ENCODE measurements at regions of chr10 and their contacts with region 1.

Region 1: DNA sequence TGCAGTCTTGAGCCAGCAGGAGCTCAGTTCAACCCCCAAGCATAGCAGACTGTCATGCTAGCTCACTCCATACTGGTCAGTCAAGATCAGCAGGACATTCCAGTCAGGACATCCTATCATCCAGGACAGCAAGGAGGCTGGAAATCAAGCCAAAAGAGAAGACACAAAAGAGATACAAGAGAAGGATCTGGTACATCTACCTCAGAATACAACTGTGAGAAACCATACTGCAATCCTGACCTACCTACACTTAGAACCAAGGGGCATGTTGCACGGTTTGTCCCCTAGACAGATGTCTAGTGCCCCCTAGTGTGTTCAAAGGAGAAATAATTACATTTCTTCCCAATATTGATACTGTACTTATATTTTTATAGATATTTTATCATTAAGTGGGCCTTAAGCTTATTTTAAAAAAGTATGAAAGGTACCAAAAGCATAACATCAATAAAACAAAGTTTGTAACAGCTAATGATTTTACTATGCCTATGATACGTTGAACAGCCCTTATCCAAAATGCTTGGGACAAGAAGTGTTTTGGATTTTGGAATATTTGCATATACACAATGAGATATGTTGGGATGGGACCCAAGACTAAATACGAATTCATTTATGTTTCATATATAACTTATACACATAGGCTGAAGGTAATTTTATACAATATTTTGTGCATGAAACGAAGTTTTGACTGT is 26.7 kb downstream of the ERCC6 start:
- DNase-seq: no peak
- H3K4me3 ChIP-seq: no peak overlapping the region
- H3K27ac ChIP-seq: no peak overlapping the region
- H3K4me1 ChIP-seq: no peaks in the 10 kb centered on the region
- H3K27me3 ChIP-seq: no peaks in the 10 kb centered on the region
- CTCF ChIP-seq: peak; percentile 37

Region 2: GRCh38 chr10:49230004-49230403 is 282.3 kb before region 1 on chr10:
- intact Hi-C with region 1: no loop called
- DNase-seq: no peak
- H3K4me3 ChIP-seq: no peak overlapping the region
- H3K27ac ChIP-seq: no peak overlapping the region
- H3K4me1 ChIP-seq: no peaks in the 10 kb centered on the region
- H3K27me3 ChIP-seq: no peaks in the 10 kb centered on the region
- CTCF ChIP-seq: no peak

Region 3: DNA sequence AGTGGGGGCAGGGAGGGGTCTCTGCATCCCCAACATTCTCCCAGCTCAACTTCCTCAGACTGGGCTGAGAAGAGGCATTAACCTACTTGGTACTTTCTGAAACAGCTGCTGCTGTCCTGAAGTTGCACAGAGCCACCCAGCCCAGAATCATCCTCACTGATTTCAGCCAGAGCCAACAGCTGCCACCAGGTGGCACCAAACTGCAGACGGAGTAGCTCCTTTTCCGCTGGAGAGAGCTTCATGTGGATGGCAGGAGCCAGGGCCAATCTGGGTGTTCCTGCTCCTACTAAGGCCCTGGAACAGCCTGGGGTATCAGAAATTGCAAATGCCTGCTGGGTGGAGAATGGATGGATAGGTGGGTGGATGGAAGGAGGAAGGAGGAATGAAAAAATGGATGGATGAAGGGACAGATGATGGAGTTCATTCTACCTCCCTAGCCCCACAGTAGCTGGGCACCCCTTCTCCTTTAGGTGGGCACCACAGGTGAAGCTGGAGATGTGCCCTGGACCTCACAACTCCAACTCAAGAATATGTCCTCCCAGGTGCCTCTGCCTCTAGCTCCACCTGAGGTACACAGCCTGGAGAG is 104.6 kb before region 1 on chr10:
- intact Hi-C with region 1: loop called (anchors 5 kb)
- DNase-seq: peak; percentile 80
- H3K4me3 ChIP-seq: no peak overlapping the region
- H3K27ac ChIP-seq: no peak overlapping the region
- H3K4me1 ChIP-seq: no peaks in the 10 kb centered on the region
- H3K27me3 ChIP-seq: no peaks in the 10 kb centered on the region
- CTCF ChIP-seq: peak; percentile 80

Region 4: DNA sequence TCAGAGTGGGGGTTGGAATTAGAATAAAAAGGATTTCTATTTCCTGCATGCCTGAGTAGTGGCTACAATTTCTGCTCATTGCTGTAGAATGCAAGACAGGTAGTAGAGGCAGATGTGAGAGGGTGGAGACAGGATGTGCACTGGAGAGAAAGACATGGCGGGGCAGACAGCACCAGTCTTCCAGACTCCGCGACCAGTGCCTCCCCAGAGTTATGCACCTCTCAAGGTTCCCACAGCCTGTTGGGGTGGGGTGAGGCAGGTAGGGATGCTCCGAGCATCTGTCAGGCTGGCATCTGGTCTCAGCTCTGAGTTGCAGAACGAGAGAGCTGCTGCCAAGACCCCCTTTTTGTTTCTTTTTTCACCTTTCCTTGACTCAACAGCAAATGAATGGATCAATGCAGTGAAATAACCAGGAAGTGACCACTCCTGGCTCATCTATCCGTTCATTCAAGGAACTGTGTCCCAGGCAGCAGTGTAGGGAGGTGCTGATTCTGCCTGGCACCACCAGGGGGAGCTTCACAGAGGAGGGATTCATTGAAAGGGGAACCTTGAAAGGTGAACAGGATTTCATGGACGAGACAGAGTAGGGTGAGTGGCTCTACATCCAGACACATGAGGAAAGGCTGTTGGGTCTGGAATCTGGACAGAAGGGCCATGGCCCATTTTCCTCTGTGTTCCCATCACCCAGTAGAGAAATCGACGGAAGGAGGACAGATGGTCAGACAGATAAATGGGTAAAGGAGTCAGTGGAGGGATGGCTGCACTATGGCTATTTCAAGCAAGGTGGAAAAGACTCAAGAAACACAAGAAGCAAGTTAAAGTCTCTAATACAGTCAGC is 80.7 kb after region 1 on chr10:
- intact Hi-C with region 1: no loop called
- DNase-seq: peak; percentile 65
- H3K4me3 ChIP-seq: no peak overlapping the region
- H3K27ac ChIP-seq: no peak overlapping the region
- H3K4me1 ChIP-seq: no peaks in the 10 kb centered on the region
- H3K27me3 ChIP-seq: no peaks in the 10 kb centered on the region
- CTCF ChIP-seq: peak; percentile 93